Pancreas (tissue), 10 donors: ENCODE measurements at regions of chr15 and their contacts with region 1.

Region 1: GRCh38 chr15:77186594-77187011 is 115.7 kb upstream of the TSPAN3 start:
- DNase-seq: no peak
- ATAC-seq: peak; percentile 42 to 73 (median 71)
- H3K4me3 ChIP-seq: no peak overlapping the region
- H3K27ac ChIP-seq: peak overlapping the region in 1 of 4 donors; percentile 45
- H3K4me1 ChIP-seq: peaks cover 0 to 28% (median 21%) of the 10 kb centered on the region in 3 donors
- H3K27me3 ChIP-seq: no peaks in the 10 kb centered on the region
- CTCF ChIP-seq: peak in 2 of 4 donors; percentile 34 to 37

Region 2: DNA sequence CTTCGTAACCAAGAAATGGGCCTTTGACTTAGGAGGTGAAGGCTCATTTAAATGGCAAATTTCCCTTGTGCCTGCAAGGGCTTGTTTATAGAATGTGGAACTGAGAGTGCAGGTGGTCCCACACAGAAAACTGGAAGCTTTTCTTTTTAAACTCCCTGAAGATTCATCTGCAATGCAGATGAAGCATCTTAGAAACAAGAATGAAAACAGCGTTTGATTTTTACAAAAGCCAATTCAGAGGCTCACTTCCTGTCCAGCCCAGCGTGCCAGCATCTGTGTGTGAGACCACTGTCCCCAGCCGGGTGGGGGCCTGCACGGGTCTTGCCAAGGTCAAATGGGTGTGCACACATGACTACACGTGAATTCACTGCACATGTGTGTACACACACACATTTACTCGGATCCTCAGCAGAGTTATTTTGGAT is 351.4 kb after region 1 on chr15:
- intact Hi-C with region 1: loop called in 1 of 3 experiments (anchors 10 kb)
- DNase-seq: no peak
- ATAC-seq: no peak
- H3K4me3 ChIP-seq: no peak overlapping the region
- H3K27ac ChIP-seq: peak overlapping the region in 1 of 4 donors; percentile 13
- H3K4me1 ChIP-seq: peaks cover 6 to 19% (median 13%) of the 10 kb centered on the region in 3 donors
- H3K27me3 ChIP-seq: no peaks in the 10 kb centered on the region
- CTCF ChIP-seq: no peak